Tibial artery (tissue), 4 donors: ENCODE measurements at regions of chr10 and their contacts with region 1.

Region 1: GRCh38 chr10:114103284-114103683 is 59.6 kb downstream of the ADRB1 start:
- DNase-seq: no peak
- H3K4me3 ChIP-seq: no peak overlapping the region
- H3K27ac ChIP-seq: no peak overlapping the region
- H3K4me1 ChIP-seq: peaks cover 0 to 15% (median 5%) of the 10 kb centered on the region in 4 donors
- H3K27me3 ChIP-seq: peaks cover 0 to 4% of the 10 kb centered on the region in 2 donors
- CTCF ChIP-seq: peak; percentile 51 to 56

Region 2: GRCh38 chr10:113704637-113705343 is 398.5 kb before region 1 on chr10:
- intact Hi-C with region 1: loop called (anchors 10 kb)
- DNase-seq: no peak
- H3K4me3 ChIP-seq: no peak overlapping the region
- H3K27ac ChIP-seq: no peak overlapping the region
- H3K4me1 ChIP-seq: peaks cover 0 to 6% (median 2%) of the 10 kb centered on the region in 4 donors
- H3K27me3 ChIP-seq: no peaks in the 10 kb centered on the region
- CTCF ChIP-seq: peak; percentile 47 to 58

Region 3: DNA sequence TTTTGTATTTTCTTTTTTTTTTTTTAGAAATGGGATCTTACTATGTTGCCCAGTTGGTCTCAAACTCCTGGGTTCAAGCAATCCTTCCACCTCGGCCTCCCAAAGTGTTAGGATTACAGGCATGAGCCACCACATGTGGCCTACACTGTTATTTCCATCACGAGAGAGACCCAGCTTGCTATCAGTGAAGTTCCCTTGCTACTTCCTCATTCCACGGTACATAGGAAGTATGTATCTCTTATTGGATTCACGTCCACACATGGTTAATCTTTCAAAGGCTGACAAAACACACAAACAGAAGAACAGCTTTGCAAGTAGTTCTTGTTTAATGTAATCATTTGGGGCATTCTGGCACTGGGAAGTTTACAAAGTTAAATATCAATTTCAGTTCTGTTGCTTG is 300.3 kb before region 1 on chr10:
- intact Hi-C with region 1: loop called (anchors 5 kb)
- DNase-seq: no peak
- H3K4me3 ChIP-seq: no peak overlapping the region
- H3K27ac ChIP-seq: no peak overlapping the region
- H3K4me1 ChIP-seq: no peaks in the 10 kb centered on the region
- H3K27me3 ChIP-seq: no peaks in the 10 kb centered on the region
- CTCF ChIP-seq: no peak

Region 4: GRCh38 chr10:114356751-114357514 is 253.6 kb after region 1 on chr10:
- intact Hi-C with region 1: no loop called
- DNase-seq: no peak
- H3K4me3 ChIP-seq: no peak overlapping the region
- H3K27ac ChIP-seq: no peak overlapping the region
- H3K4me1 ChIP-seq: peaks cover 0 to 42% (median 8%) of the 10 kb centered on the region in 4 donors
- H3K27me3 ChIP-seq: no peaks in the 10 kb centered on the region
- CTCF ChIP-seq: no peak